ENCODE measurements at regions of chr16 and their contacts with region 1.

Region 1: DNA sequence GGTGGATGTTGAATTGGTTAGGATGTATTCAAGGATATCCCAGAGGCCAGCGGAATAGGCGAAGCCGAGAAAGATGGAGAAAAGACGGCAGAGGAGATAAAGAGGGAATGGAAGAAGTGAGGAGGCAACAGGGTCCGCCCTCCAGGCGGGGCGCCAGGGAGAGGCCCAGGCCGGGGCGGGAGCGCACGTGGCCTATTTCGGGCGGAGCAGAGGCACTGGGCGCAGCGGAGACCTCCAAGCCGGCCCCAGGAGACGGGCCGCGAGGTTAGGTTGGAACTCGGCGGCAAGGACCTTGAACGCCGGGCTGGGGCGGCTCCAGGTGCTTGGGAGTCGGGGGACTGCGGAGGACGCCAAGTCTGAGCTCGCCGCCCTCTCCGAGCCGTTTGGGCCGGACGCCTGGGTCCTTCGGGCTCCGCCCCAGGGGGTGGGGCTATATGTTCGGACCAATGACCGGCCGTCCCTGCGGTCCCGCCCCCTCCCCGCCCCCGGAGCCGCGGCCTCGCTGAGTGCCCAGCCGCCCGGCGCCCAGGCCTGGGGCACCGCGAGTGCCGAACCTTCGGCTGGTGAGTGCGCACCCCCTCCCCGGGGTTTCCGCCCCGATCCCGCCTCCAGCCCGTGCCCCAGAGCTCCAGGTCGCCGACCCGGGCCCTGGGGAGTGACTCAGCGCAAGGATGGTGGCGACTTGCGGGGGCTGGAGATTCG is at the start of gene ZNF771:
- DNase-seq: peak; percentile 94
- ATAC-seq: peak; percentile 92
- H3K4me3 Mint-ChIP-seq: peak within 1 kb of the TSS; percentile 79
- H3K27ac Mint-ChIP-seq: peak within 1 kb of the TSS; percentile 82
- H3K4me1 Mint-ChIP-seq: peaks cover 31% of the 10 kb centered on the region
- H3K27me3 Mint-ChIP-seq: peaks cover 10% of the 10 kb centered on the region
- total RNA-seq, gene ZNF771: 4.9 to 5.4 TPM

Region 2: DNA sequence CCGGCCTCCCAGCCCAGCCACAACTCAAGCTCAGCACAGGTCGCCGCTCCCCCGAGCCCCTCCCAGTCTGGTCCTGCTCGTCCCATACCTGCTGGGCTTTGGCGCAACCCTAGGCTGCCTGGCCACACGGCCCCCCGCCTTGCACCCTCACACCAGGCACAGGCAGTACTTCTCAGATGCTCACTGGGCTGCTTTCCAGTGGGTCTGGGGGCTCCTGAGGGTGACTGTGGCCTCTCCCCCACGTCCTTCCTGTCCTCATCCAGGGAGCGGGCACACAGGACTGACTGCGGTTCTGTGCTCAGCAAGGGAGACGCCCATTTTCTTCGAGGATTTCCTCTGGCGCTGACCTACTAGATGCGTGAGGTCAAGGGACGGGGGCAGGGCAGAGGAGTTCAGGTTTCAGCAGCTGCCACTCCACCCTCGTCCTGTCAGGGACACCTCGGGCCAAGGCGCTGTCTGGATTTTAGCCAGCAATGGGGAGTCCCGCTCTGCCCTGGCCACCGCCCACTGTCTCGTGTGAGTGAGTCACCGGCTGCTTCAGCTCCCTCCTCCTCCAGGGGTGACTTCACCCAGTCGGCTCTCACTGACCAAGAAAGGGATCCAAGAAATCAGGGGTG is 1116.5 kb before region 1 on chr16:
- CTCF ChIA-PET with region 1: no interaction called
- DNase-seq: peak; percentile 80
- ATAC-seq: peak; percentile 91
- H3K4me3 Mint-ChIP-seq: peak overlapping the region; percentile 18
- H3K27ac Mint-ChIP-seq: no peak overlapping the region
- H3K4me1 Mint-ChIP-seq: peaks cover 8% of the 10 kb centered on the region
- H3K27me3 Mint-ChIP-seq: no peaks in the 10 kb centered on the region

Region 3: DNA sequence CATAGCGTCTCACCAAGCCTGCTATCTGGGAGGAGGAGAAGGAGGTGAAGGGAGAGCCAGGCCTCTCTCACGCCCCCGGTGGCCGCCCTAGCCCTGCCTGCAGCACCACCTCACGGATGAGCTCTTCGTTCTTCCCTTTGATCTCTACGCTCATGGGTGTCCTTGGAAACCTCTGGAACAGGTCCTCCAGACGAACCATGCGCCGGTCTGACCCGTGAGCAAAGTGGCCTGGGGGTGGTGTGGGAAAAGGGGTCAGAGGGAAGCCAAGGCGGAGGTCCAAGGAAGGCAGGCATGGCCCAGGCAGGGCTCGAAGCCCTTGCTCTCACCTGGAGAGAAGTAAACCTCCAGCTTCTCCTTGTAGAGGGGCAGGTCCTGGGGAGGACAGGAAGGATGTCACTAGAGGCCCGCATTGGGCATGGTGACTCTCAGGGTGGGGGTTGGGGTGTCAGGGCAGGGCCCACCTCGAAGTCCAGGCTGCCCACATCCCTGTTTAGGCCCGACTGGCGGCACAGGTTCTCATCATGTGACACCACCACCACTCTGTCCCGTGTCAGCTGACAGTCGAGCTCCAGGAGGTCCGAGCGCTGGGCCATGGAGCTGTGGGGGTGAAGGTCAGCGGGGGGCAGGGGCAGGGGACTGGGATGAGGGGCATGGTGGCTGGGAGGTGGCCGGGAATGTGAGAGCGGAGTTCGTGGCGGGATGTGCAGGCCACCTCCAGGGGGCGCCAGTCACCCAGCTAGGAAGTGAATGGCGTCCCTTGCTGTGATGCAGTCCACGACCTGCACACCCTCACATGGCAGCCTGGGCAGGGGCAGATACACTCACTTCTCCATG is 294.8 kb before region 1 on chr16:
- CTCF ChIA-PET with region 1: interaction called, 10 read pairs
- DNase-seq: peak; percentile 75
- ATAC-seq: peak; percentile 70
- H3K4me3 Mint-ChIP-seq: no peak overlapping the region
- H3K27ac Mint-ChIP-seq: no peak overlapping the region
- H3K4me1 Mint-ChIP-seq: peaks cover 11% of the 10 kb centered on the region
- H3K27me3 Mint-ChIP-seq: no peaks in the 10 kb centered on the region

Region 4: GRCh38 chr16:30183233-30184095 is 223.8 kb before region 1 on chr16 and contains the start of gene CORO1A:
- CTCF ChIA-PET with region 1: interaction called, 10 read pairs
- DNase-seq: peak; percentile 93
- ATAC-seq: peak; percentile 59
- H3K4me3 Mint-ChIP-seq: peak within 1 kb of the TSS; percentile 100
- H3K27ac Mint-ChIP-seq: peak within 1 kb of the TSS; percentile 100
- H3K4me1 Mint-ChIP-seq: peaks cover 30% of the 10 kb centered on the region
- H3K27me3 Mint-ChIP-seq: no peaks in the 10 kb centered on the region
- total RNA-seq, gene CORO1A: 1,639 to 1,875 TPM

Region 5: GRCh38 chr16:30370444-30371247 is 36.6 kb before region 1 on chr16 and contains the start of gene TBC1D10B:
- CTCF ChIA-PET with region 1: interaction called, 61 read pairs
- DNase-seq: peak; percentile 100
- ATAC-seq: peak; percentile 84
- H3K4me3 Mint-ChIP-seq: peak within 1 kb of the TSS; percentile 95
- H3K27ac Mint-ChIP-seq: peak within 1 kb of the TSS; percentile 94
- H3K4me1 Mint-ChIP-seq: peaks cover 41% of the 10 kb centered on the region
- H3K27me3 Mint-ChIP-seq: no peaks in the 10 kb centered on the region
- total RNA-seq, gene TBC1D10B: 84.1 to 87.3 TPM

Region 6: GRCh38 chr16:30395155-30395991 is 11.9 kb before region 1 on chr16 and contains the start of gene ZNF48:
- CTCF ChIA-PET with region 1: interaction called, 73 read pairs
- DNase-seq: peak; percentile 67
- ATAC-seq: peak; percentile 78
- H3K4me3 Mint-ChIP-seq: peak within 1 kb of the TSS; percentile 79
- H3K27ac Mint-ChIP-seq: peak within 1 kb of the TSS; percentile 70
- H3K4me1 Mint-ChIP-seq: peaks cover 44% of the 10 kb centered on the region
- H3K27me3 Mint-ChIP-seq: peaks cover 2% of the 10 kb centered on the region
- total RNA-seq, gene ZNF48: 13.7 to 15.6 TPM

Region 7: GRCh38 chr16:30615358-30616091 is 208.3 kb after region 1 on chr16:
- CTCF ChIA-PET with region 1: interaction called, 21 read pairs
- DNase-seq: peak; percentile 88
- ATAC-seq: peak; percentile 87
- H3K4me3 Mint-ChIP-seq: no peak overlapping the region
- H3K27ac Mint-ChIP-seq: no peak overlapping the region
- H3K4me1 Mint-ChIP-seq: peaks cover 15% of the 10 kb centered on the region
- H3K27me3 Mint-ChIP-seq: peaks cover 4% of the 10 kb centered on the region